Endothelial cell of umbilical vein (primary cell): ENCODE measurements at regions of chr1 and their contacts with region 1.

Region 1: GRCh38 chr1:70427976-70428375 is 16.9 kb downstream of the CTH start:
- DNase-seq: no peak
- H3K4me3 ChIP-seq: no peak overlapping the region
- H3K27ac ChIP-seq: no peak overlapping the region
- H3K4me1 ChIP-seq: peaks cover 10% of the 10 kb centered on the region
- H3K27me3 ChIP-seq: no peaks in the 10 kb centered on the region
- CTCF ChIP-seq: no peak
- POLR2A ChIP-seq: no peak

Region 2: GRCh38 chr1:70277875-70278274 is 150.1 kb before region 1 on chr1:
- CTCF ChIA-PET with region 1: no interaction called
- POLR2A ChIA-PET with region 1: no interaction called
- dilution Hi-C with region 1: no loop called
- intact Hi-C with region 1: no loop called
- DNase-seq: no peak
- H3K4me3 ChIP-seq: no peak overlapping the region
- H3K27ac ChIP-seq: no peak overlapping the region
- H3K4me1 ChIP-seq: no peaks in the 10 kb centered on the region
- H3K27me3 ChIP-seq: no peaks in the 10 kb centered on the region
- CTCF ChIP-seq: no peak
- POLR2A ChIP-seq: no peak

Region 3: GRCh38 chr1:70324683-70325082 is 103.3 kb before region 1 on chr1:
- CTCF ChIA-PET with region 1: no interaction called
- POLR2A ChIA-PET with region 1: no interaction called
- dilution Hi-C with region 1: no loop called
- intact Hi-C with region 1: no loop called
- DNase-seq: no peak
- H3K4me3 ChIP-seq: no peak overlapping the region
- H3K27ac ChIP-seq: no peak overlapping the region
- H3K4me1 ChIP-seq: peaks cover 6% of the 10 kb centered on the region
- H3K27me3 ChIP-seq: no peaks in the 10 kb centered on the region
- CTCF ChIP-seq: no peak
- POLR2A ChIP-seq: no peak

Region 4: GRCh38 chr1:70475023-70475422 is 47.0 kb after region 1 on chr1:
- CTCF ChIA-PET with region 1: no interaction called
- POLR2A ChIA-PET with region 1: no interaction called
- dilution Hi-C with region 1: no loop called
- intact Hi-C with region 1: loop called (anchors 5 kb)
- DNase-seq: no peak
- H3K4me3 ChIP-seq: no peak overlapping the region
- H3K27ac ChIP-seq: no peak overlapping the region
- H3K4me1 ChIP-seq: no peaks in the 10 kb centered on the region
- H3K27me3 ChIP-seq: no peaks in the 10 kb centered on the region
- CTCF ChIP-seq: no peak
- POLR2A ChIP-seq: no peak